Activated naive CD4-positive, alpha-beta T cell treated with anti-CD3 and anti-CD28 coated beads for 36 hours (primary cell): ENCODE measurements at regions of chr19 and their contacts with region 1.

Region 1: GRCh38 chr19:40750059-40750873 is at the start of gene ACTMAP:
- DNase-seq: peak; percentile 100
- H3K4me3 Mint-ChIP-seq: peak within 1 kb of the TSS; percentile 99
- H3K27ac Mint-ChIP-seq: peak within 1 kb of the TSS; percentile 99
- H3K4me1 Mint-ChIP-seq: peaks cover 33% of the 10 kb centered on the region
- H3K27me3 Mint-ChIP-seq: no peaks in the 10 kb centered on the region
- total RNA-seq, gene ACTMAP: 23.0 to 25.0 TPM

Region 2: GRCh38 chr19:40358773-40359172 is 391.5 kb before region 1 on chr19:
- CTCF ChIA-PET with region 1: no interaction called
- intact Hi-C with region 1: no loop called
- DNase-seq: no peak
- H3K4me3 Mint-ChIP-seq: no peak overlapping the region
- H3K27ac Mint-ChIP-seq: no peak overlapping the region
- H3K4me1 Mint-ChIP-seq: peaks cover 9% of the 10 kb centered on the region
- H3K27me3 Mint-ChIP-seq: no peaks in the 10 kb centered on the region

Region 3: GRCh38 chr19:40662921-40663694 is 87.2 kb before region 1 on chr19:
- CTCF ChIA-PET with region 1: interaction called, 3 read pairs
- intact Hi-C with region 1: loop called (anchors 2 kb)
- DNase-seq: peak; percentile 91
- H3K4me3 Mint-ChIP-seq: peak overlapping the region; percentile 78
- H3K27ac Mint-ChIP-seq: peak overlapping the region; percentile 71
- H3K4me1 Mint-ChIP-seq: peaks cover 20% of the 10 kb centered on the region
- H3K27me3 Mint-ChIP-seq: no peaks in the 10 kb centered on the region

Region 4: GRCh38 chr19:40724855-40725254 is 25.4 kb before region 1 on chr19:
- CTCF ChIA-PET with region 1: interaction called, 3 read pairs
- intact Hi-C with region 1: loop called (anchors 2 kb)
- DNase-seq: peak; percentile 45
- H3K4me3 Mint-ChIP-seq: no peak overlapping the region
- H3K27ac Mint-ChIP-seq: peak overlapping the region; percentile 70
- H3K4me1 Mint-ChIP-seq: peaks cover 45% of the 10 kb centered on the region
- H3K27me3 Mint-ChIP-seq: no peaks in the 10 kb centered on the region

Region 5: GRCh38 chr19:40798223-40798996 is 48.1 kb after region 1 on chr19:
- CTCF ChIA-PET with region 1: no interaction called
- intact Hi-C with region 1: loop called (anchors 1 kb)
- DNase-seq: peak; percentile 100
- H3K4me3 Mint-ChIP-seq: peak overlapping the region; percentile 92
- H3K27ac Mint-ChIP-seq: peak overlapping the region; percentile 97
- H3K4me1 Mint-ChIP-seq: peaks cover 49% of the 10 kb centered on the region
- H3K27me3 Mint-ChIP-seq: no peaks in the 10 kb centered on the region

Region 6: DNA sequence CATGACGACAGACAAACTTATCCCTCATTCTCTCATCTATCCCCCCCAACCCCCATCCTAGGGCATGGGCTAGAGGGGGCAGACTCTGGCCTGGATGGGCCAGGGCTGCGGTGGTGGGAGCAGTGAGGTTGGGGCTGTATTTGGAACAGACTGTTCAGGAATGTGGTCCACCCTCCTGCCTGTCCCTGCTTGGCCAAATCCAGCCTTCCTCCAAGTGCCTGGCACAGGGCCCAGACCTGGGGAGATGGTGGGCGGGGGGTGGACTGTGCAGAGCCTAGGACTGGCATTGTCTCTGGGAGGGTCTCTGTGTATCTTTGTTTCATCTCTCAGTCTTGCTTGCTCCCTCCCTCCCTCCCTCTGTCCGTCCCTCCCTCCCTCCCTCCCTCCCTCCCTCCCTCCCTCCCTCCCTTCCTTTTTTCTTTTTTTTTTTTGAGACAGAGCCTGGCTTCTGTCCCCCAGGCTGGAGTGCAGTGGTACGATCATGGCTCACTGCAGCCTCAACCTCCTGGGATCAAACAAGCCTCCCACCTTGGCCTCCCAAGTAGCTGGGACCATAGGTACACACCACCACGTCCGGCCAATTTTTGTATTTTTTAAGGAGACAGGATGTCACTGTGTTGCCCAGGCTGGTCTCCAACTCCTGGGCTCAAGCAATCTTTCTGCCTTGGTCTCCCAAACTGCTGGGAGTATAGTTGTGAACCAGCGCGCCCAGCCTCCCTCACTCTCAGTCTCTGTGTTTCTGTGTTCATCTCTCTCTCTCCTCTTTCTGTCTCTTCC is 63.1 kb after region 1 on chr19:
- CTCF ChIA-PET with region 1: interaction called, 34 read pairs
- intact Hi-C with region 1: no loop called
- DNase-seq: no peak
- H3K4me3 Mint-ChIP-seq: no peak overlapping the region
- H3K27ac Mint-ChIP-seq: no peak overlapping the region
- H3K4me1 Mint-ChIP-seq: peaks cover 35% of the 10 kb centered on the region
- H3K27me3 Mint-ChIP-seq: no peaks in the 10 kb centered on the region